GM10248 (cell line): ENCODE measurements at regions of chr7 and their contacts with region 1.

Region 1: GRCh38 chr7:108384721-108385481 is 71.3 kb downstream of the NRCAM start:
- DNase-seq: peak; percentile 10
- CTCF ChIP-seq: peak; percentile 38

Region 2: DNA sequence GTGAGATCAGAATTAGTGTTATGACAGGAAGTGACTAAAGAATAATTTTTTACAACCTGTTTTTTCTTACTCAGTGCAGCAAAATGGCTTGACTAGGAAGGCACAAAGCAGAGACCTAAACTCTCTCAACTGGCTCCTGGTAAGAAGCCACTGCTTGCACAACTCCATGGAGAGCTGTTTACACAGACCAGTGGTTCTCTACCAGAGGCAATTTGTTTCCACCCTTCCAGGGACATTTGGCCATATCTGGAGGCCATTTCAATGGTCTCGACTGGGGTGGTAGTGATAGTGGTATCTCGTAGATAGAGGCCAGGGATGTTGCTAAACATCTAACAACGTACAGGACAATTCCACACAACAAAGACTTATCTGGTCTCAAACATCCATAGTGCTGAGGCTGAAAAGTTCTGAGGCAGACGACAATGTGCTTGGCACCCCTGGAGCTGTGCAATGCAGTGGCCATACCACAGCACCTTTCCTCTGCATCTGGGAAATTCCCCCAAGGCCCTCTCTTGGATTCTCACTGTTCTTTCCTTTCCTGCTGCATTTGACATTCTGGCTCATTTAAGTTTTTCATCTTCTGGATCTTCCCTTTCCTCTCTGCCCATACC is 149.3 kb before region 1 on chr7:
- CTCF ChIA-PET with region 1: no interaction called
- POLR2A ChIA-PET with region 1: no interaction called
- DNase-seq: no peak
- CTCF ChIP-seq: no peak

Region 3: DNA sequence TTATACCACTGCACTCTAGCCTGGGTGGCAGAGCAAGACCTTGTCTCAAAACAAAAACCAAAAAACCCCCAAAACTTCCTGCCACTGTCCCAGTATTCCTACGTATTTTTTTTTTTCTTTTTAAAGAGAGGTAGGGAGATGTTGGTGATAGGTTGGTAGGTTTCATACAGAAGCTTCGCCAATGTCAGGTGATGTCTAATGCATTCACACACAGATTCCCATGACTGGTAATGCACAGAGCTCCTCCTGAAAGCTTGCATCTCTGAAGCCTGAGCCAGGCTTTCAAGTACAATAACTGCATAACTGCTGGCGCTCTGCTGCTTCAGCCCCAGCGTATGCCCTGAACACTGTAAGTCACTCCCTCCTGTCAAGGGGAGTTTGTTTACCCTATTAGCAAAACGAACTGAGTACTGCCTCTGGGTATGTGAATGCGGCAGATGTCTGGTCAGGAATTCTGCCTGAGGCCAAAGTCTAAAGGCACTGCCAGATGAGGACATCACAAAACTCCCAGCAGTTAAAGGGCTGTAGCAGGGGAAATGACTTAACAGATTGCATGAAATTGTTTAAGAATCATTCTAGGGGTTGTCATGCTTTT is 26.4 kb before region 1 on chr7:
- CTCF ChIA-PET with region 1: interaction called, 12 read pairs
- POLR2A ChIA-PET with region 1: no interaction called
- DNase-seq: no peak
- CTCF ChIP-seq: no peak

Region 4: DNA sequence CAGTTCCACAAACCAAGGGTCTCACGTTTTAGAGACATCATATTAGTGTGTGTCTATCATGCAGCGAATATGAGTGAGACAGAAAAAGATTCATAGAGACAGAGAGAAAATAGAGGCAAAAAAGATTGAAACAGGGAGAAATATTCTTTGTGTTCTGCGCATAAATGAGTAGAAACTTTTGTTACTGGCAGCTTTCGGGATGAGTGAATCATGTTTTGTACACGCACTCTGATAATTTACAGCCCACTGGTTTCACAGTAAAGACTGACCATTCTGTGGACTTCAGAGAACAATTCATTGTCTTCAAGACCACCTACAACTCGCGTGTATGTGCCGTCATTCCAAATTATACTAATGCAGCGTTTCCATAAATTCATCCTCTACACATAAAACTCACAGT is 11.2 kb after region 1 on chr7:
- CTCF ChIA-PET with region 1: interaction called, 11 read pairs
- POLR2A ChIA-PET with region 1: no interaction called
- DNase-seq: no peak
- CTCF ChIP-seq: no peak

Region 5: DNA sequence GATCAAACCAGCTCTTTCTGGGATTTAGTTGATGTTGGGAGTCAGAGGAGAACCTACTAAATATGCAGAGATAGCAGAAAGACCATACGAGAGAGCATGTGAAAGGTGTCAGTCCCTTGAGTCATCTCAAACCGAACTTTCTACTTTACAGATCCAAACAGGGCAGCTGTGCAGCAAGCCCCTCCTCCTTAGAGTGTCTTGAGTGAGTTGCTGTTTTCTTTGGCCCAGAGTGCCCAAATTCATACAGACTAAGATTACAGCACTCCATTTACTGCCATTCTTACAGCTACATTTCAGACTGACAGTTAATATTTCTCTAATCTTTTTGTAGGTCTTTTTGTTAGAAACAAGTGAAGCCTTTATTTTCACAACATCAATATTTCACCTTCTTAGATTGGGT is 18.0 kb after region 1 on chr7:
- CTCF ChIA-PET with region 1: interaction called, 11 read pairs
- POLR2A ChIA-PET with region 1: no interaction called
- DNase-seq: no peak
- CTCF ChIP-seq: no peak

Region 6: DNA sequence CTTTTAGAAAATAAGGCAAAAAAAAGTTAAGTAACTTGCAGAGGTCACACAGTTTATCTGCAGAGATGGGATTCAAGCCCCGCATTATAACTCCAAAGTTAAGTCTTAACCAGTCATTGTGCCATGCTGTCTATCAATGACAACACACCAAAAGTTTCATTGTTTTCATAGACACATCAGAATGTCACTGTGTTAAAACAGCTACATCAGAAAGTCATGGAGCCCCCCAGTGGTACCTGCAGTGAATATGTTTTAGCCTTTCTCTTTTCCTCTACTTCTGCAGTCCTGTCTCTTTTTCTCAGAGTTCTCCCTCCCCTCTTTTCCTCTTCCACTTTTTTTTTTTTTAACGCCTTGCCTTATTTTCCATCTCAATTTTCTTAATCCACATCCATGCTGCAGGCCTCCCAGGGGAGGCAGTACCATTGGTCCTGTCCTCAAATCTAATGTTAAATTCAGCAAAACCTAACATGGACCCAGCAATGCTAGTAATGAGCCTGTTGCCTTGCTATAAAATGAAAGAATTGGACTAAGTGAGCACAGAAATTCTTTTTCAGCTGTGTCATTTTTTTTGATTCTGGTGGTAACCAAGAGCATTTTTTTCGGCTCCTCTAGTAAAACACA is 75.1 kb after region 1 on chr7:
- CTCF ChIA-PET with region 1: interaction called, 10 read pairs
- POLR2A ChIA-PET with region 1: no interaction called
- DNase-seq: peak; percentile 46
- CTCF ChIP-seq: peak; percentile 62

Region 7: DNA sequence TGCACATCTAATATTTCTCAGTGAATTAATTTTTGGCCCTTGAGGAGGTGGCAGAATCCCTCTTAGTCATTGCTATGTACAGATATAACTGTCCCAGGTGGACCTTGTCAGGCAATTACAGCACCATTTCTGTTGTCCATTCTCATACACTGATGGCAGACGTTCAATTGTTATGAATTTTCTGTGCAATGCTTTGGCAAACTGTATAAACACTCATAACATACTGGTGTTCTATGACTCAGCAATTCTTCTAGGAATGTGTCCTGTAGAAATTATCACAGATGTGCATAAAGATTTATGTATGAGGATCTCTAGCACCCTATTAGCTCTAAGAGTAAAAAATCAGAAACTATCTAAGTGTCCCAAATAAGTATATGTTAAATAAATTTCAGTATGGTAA is 265.6 kb after region 1 on chr7:
- CTCF ChIA-PET with region 1: no interaction called
- POLR2A ChIA-PET with region 1: no interaction called
- DNase-seq: no peak
- CTCF ChIP-seq: no peak